A673 (cell line): ENCODE measurements at regions of chr5 and their contacts with region 1.

Region 1: GRCh38 chr5:172764849-172765765 is 5.9 kb downstream of the DUSP1 start:
- DNase-seq: peak; percentile 98
- H3K4me3 ChIP-seq: peak overlapping the region; percentile 56
- H3K27ac ChIP-seq: peak overlapping the region; percentile 93
- H3K4me1 ChIP-seq: peaks cover 35% of the 10 kb centered on the region
- H3K27me3 ChIP-seq: no peaks in the 10 kb centered on the region
- CTCF ChIP-seq: no peak

Region 2: GRCh38 chr5:171965745-171966144 is 799.4 kb before region 1 on chr5:
- CTCF ChIA-PET with region 1: no interaction called
- POLR2A ChIA-PET with region 1: interaction called, 15 read pairs
- intact Hi-C with region 1: no loop called
- DNase-seq: peak; percentile 35
- H3K4me3 ChIP-seq: no peak overlapping the region
- H3K27ac ChIP-seq: peak overlapping the region; percentile 65
- H3K4me1 ChIP-seq: peaks cover 43% of the 10 kb centered on the region
- H3K27me3 ChIP-seq: no peaks in the 10 kb centered on the region
- CTCF ChIP-seq: no peak

Region 3: GRCh38 chr5:172843809-172844577 is 78.9 kb after region 1 on chr5:
- CTCF ChIA-PET with region 1: no interaction called
- POLR2A ChIA-PET with region 1: interaction called, 15 read pairs
- intact Hi-C with region 1: no loop called
- DNase-seq: no peak
- H3K4me3 ChIP-seq: no peak overlapping the region
- H3K27ac ChIP-seq: no peak overlapping the region
- H3K4me1 ChIP-seq: peaks cover 4% of the 10 kb centered on the region
- H3K27me3 ChIP-seq: no peaks in the 10 kb centered on the region
- CTCF ChIP-seq: no peak